HEK293 (cell line): ENCODE measurements at regions of chr7 and their contacts with region 1.

Region 1: DNA sequence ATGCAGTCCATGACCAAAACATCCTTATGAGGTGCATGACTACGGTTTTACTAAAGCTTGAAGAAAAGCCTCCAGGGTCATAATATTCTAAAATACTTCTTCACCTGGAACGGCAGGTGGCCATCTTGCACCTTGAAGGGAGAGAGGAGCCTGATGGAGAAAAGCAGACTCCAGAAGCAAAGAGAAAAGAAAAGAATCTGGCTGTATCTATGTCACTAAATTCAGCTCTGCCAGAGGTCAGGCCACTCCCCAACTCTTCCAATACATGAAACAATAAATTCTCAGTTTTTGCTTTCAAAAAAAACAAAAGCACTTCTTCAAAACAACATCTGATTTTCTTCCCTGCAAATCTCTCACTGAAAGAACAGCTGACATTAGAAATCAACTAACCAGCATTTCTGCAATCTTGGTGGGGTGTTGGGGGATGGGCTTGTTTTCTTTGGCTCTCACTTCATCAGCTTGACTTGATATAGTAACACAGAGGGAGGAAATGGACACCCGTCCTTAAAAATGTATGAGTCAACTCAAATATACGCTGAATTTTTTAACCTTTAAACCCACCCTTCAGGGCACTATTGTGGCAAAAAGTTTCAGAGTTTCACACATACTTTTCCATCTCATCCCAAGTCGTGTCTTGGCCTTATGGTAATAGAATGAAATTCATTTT is 21.6 kb downstream of the HIBADH start:
- H3K4me3 ChIP-seq: no peak overlapping the region
- H3K27ac ChIP-seq: peak overlapping the region; percentile 42
- H3K4me1 ChIP-seq: peaks cover 24% of the 10 kb centered on the region
- CTCF ChIP-seq: no peak

Region 2: DNA sequence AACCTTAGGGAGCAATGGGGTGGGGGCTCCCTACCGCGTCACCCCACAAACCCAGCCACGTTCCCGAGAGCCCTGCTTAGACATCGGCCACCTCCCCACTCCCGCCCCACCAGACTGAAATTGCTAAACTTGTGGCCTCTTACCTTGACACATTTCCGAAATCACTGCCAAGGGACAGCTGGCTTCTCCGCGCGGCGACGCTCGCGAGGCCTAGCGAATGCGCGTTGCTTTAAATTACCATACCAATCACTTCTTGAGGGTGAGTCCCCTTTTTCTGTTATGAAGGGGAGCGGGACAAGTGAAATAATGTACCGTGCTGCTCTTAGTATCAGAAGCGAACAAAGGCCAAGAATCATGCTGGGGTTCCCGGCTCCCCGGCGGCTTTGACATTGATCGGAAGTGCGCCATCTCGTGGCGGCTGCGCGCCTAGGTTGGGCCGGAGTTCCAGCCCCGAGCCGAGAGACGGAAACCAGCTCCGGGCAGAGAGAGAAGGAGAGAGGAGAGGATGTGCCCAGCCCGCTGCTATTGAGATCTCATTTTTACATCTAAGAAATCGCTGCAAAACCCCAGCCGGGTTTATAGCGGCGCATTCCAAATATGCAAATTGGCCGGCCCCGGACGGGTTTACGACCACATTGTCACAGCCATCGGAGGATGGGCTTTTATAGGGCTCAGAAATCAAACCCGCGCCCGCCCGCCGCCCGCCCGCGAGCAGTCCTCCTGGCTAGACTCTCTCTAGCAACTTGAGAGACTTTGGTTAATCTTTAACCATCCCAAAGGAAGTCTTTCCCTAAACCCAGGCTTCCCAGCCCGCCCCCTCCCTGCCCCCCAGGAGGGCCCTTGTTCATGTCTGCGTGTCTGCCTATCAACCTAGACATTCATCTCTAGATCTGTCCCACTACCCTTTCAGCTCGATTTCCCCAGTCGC is 461.3 kb before region 1 on chr7:
- CTCF ChIA-PET with region 1: interaction called, 3 read pairs
- POLR2A ChIA-PET with region 1: interaction called, 10 read pairs
- H3K4me3 ChIP-seq: peak overlapping the region; percentile 76
- H3K27ac ChIP-seq: peak overlapping the region; percentile 99
- H3K4me1 ChIP-seq: peaks cover 36% of the 10 kb centered on the region
- CTCF ChIP-seq: peak; percentile 83

Region 3: DNA sequence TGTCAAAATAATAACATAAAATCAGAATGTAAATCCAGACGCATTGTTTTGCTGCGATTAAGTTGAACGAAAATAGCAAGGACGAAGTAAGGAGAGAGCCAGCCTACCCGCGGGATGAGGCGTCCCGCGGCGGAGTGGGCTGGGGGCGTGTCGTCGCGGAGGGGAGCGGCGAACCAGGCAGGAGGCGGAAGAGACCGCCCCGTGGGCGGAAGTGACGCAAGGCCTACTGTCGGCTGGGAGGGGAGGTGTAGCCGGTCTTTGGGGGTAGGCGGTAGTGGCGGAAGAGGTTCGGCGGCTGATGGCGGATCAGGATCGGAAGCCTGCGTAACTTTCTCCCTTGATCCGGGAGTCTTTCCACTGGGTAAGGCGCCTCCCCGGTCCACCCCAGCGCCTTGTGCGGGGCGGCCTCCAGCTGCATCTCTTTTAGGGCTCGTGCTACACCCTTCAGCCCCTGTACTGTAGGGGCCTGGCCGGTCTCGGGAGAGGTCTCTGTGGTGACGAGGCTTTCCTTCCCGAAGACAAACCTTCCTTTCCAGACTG is 98.9 kb after region 1 on chr7 and contains the start of gene TAX1BP1:
- CTCF ChIA-PET with region 1: interaction called, 7 read pairs
- POLR2A ChIA-PET with region 1: interaction called, 12 read pairs
- H3K4me3 ChIP-seq: peak within 1 kb of the TSS; percentile 98
- H3K27ac ChIP-seq: peak within 1 kb of the TSS; percentile 82
- H3K4me1 ChIP-seq: peaks cover 8% of the 10 kb centered on the region
- CTCF ChIP-seq: no peak

Region 4: DNA sequence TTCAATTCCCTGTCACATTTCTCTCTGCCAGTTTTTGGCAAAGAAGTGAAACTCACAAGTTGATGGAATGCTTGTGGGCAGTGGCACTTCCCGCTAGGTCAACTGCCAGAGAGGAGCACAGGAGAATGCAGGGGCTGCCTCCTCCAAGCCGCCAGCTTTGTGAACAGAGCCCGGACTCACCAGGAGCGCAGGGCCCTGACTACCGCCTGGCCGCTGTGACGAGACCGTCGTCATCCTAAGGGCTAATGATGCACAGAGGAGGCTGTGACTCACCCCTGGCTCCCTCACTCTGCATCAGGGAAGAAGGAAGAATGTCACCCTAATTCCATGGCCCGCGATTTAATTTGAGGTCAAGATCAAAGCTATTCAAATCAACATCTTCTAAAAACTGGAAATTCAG is 222.8 kb after region 1 on chr7:
- CTCF ChIA-PET with region 1: no interaction called
- POLR2A ChIA-PET with region 1: no interaction called
- H3K4me3 ChIP-seq: no peak overlapping the region
- H3K27ac ChIP-seq: no peak overlapping the region
- H3K4me1 ChIP-seq: no peaks in the 10 kb centered on the region
- CTCF ChIP-seq: no peak